ENCODE measurements at regions of chr10 and their contacts with region 1.

Region 1: GRCh38 chr10:3757638-3758490 is 27.1 kb downstream of the KLF6 start:
- DNase-seq: peak; percentile 84
- H3K4me3 Mint-ChIP-seq: peak overlapping the region; percentile 62
- H3K27ac Mint-ChIP-seq: peak overlapping the region; percentile 99
- H3K4me1 Mint-ChIP-seq: peaks cover 77% of the 10 kb centered on the region
- H3K27me3 Mint-ChIP-seq: no peaks in the 10 kb centered on the region

Region 2: DNA sequence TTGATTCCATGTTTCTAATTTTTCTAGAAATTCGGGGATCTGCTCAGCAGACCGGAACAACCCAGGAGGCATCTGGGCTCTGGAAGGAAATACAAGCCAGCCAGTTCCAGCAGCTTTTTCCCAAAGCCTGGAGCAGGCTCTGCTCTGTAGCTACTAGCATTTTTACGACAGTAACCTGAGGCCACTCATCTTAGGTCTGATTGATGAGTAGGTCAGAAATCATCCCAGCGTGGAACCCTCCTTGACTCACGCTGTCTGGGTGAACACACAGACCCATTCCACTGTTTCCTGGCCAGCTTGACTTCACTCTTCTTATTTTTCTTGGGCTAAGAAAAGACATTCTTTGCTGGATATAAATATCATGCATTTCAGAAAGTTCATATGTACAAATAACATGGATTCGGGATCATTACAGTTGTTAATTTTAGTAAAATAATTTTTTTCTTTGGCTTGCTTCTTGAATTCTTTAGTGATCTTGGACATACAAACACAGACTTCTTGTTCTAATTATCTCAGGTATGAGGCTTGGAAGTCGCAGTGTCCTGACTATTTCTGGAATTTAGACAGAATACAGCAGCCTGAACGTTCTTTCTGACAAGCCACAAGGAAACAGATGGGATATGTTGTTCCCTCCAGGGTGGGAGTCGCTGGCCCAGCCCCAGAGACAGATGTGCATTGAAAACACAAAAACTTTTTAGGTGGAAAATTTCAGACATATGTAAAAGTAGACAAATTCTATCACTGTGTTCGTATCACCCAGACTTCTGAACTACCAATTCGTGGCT is 530.7 kb before region 1 on chr10:
- CTCF ChIA-PET with region 1: no interaction called
- intact Hi-C with region 1: loop called (anchors 5 kb)
- DNase-seq: no peak
- H3K4me3 Mint-ChIP-seq: no peak overlapping the region
- H3K27ac Mint-ChIP-seq: no peak overlapping the region
- H3K4me1 Mint-ChIP-seq: peaks cover 22% of the 10 kb centered on the region
- H3K27me3 Mint-ChIP-seq: peaks cover 2% of the 10 kb centered on the region

Region 3: DNA sequence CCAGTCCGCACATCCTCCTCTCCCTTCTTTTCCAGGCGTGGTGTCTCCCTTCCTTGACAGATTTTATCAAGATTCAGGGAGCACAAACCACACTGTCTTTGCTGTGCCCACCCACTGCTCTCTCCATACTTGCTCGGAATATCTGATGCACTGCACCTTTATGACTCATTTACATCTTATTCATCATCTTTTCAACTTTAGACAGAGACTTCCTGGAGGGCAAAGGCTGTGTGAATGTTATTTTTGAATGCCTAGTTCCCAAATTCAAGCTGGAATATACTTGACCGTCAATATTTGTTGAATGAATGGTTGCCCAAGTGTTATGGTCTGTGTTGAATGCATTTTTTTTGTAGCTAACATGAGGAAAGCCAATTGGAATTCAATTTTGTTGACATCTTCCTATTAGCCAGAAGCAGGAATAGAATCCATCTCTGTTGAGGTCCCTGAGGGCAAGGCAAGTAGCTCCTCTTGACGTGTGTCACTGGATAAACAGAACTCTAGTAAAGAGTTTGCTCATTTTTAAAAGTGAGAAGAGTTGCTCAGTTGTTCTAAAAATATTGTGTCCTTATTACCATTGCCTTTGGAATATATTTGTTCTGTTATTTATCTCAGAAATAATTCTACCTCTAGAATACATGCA is 67.9 kb before region 1 on chr10:
- CTCF ChIA-PET with region 1: no interaction called
- intact Hi-C with region 1: loop called (anchors 5 kb)
- DNase-seq: peak; percentile 43
- H3K4me3 Mint-ChIP-seq: no peak overlapping the region
- H3K27ac Mint-ChIP-seq: peak overlapping the region; percentile 56
- H3K4me1 Mint-ChIP-seq: peaks cover 19% of the 10 kb centered on the region
- H3K27me3 Mint-ChIP-seq: no peaks in the 10 kb centered on the region

Region 4: DNA sequence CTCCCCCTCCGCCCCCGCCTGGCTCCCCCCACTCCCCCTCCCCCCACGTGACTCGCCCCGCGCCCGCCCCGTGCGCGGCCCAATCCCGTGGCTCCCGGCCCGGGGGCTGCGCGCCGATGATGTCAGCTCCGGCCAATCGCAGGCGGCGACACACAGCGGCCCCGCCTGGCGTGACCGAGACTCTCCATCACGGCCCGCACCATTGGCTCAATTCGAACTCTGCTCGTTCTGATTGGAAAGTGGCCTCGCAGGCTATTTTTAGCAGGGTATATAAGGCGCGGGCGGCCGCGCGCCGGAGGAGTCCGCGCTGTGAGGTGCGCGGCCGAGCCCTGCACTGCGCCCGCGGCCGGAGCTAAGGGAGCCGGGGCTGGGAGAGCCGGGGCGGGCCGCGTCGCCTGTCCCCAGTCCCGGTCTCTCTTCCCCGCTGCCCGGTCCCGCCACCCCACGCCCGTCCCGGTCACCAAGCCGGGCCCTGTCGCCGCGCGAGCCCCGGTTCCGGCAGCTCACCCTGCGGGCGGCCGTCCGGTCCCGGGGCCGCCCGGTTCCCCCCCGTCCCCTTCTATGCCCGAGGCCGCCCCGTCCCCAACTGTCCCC is 27.5 kb after region 1 on chr10:
- CTCF ChIA-PET with region 1: no interaction called
- intact Hi-C with region 1: loop called (anchors 1 kb)
- DNase-seq: peak; percentile 99
- H3K4me3 Mint-ChIP-seq: peak overlapping the region; percentile 96
- H3K27ac Mint-ChIP-seq: peak overlapping the region; percentile 99
- H3K4me1 Mint-ChIP-seq: peaks cover 30% of the 10 kb centered on the region
- H3K27me3 Mint-ChIP-seq: no peaks in the 10 kb centered on the region

Region 5: GRCh38 chr10:3852147-3852904 is 94.5 kb after region 1 on chr10:
- CTCF ChIA-PET with region 1: no interaction called
- intact Hi-C with region 1: loop called (anchors 1 kb)
- DNase-seq: peak; percentile 85
- H3K4me3 Mint-ChIP-seq: no peak overlapping the region
- H3K27ac Mint-ChIP-seq: peak overlapping the region; percentile 88
- H3K4me1 Mint-ChIP-seq: peaks cover 49% of the 10 kb centered on the region
- H3K27me3 Mint-ChIP-seq: no peaks in the 10 kb centered on the region

Region 6: GRCh38 chr10:3935141-3935540 is 177.3 kb after region 1 on chr10:
- CTCF ChIA-PET with region 1: no interaction called
- intact Hi-C with region 1: loop called (anchors 1 kb)
- DNase-seq: peak; percentile 92
- H3K4me3 Mint-ChIP-seq: peak overlapping the region; percentile 10
- H3K27ac Mint-ChIP-seq: peak overlapping the region; percentile 88
- H3K4me1 Mint-ChIP-seq: peaks cover 40% of the 10 kb centered on the region
- H3K27me3 Mint-ChIP-seq: no peaks in the 10 kb centered on the region

Measured in activated naive CD4-positive, alpha-beta T cell treated with anti-CD3 and anti-CD28 coated beads for 36 hours (primary cell).